K562 (cell line): ENCODE measurements at regions of chr7 and their contacts with region 1.

Region 1: GRCh38 chr7:30504347-30505173 is at the start of gene GGCT:
- DNase-seq: peak; percentile 99 to 100 (median 100)
- ATAC-seq: peak; percentile 98
- H3K4me3 ChIP-seq: peak within 1 kb of the TSS; percentile 82
- H3K27ac ChIP-seq: peak within 1 kb of the TSS; percentile 82
- H3K4me1 ChIP-seq: peaks cover 14 to 16% of the 10 kb centered on the region in 2 experiments; a peak in 4 of 5 replicates
- H3K27me3 ChIP-seq: no peaks in the 10 kb centered on the region
- CTCF ChIP-seq: 0 out of 6 replicates have a peak, but pooled peaks of 1 of the 3 experiments have one; percentile 4
- EP300 ChIP-seq: peak; percentile 23
- POLR2A ChIP-seq: peak; percentile 94
- RAD21 ChIP-seq: no peak
- polyA plus RNA-seq, gene GGCT: 285 to 349 TPM

Region 2: GRCh38 chr7:30478349-30479201 is 26.0 kb before region 1 on chr7 and contains the start of gene NOD1:
- CTCF ChIA-PET with region 1: no interaction called
- POLR2A ChIA-PET with region 1: interaction called, 3 read pairs
- in situ Hi-C with region 1: no loop called
- intact Hi-C with region 1: loop called (anchors 1 kb)
- DNase-seq: peak; percentile 83 to 87 (median 86)
- ATAC-seq: peak; percentile 99
- H3K4me3 ChIP-seq: peak within 1 kb of the TSS; percentile 68
- H3K27ac ChIP-seq: peak within 1 kb of the TSS; percentile 58
- H3K4me1 ChIP-seq: peaks cover 16% of the 10 kb centered on the region in 2 experiments
- H3K27me3 ChIP-seq: no peaks in the 10 kb centered on the region
- CTCF ChIP-seq: 0 out of 6 replicates have a peak, but pooled peaks of 1 of the 3 experiments have one; percentile 3
- EP300 ChIP-seq: no peak
- POLR2A ChIP-seq: peak; percentile 86
- RAD21 ChIP-seq: no peak
- polyA plus RNA-seq, gene NOD1: 0.34 to 1.1 TPM

Region 3: DNA sequence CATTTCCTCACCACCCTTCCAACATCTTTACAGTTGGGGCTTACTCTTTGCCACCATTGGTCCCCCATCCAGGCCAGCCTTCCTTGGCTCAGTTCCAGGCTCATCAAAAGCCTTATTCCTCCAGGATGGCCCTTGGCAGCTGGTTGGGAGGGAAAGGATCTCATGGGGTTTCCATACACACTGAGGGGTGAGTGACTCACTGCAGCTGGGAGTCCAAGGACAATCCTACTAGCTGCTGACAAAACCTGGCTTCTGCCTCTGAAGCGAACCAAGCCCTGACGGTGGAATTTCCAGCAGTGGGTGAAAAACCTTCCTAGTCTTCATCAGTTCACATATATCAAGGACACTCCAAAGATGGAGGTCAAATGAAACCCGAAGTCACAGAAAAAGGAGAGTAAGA is 154.8 kb after region 1 on chr7:
- CTCF ChIA-PET with region 1: no interaction called
- POLR2A ChIA-PET with region 1: no interaction called
- in situ Hi-C with region 1: no loop called
- intact Hi-C with region 1: no loop called
- DNase-seq: no peak
- ATAC-seq: no peak
- H3K4me3 ChIP-seq: no peak overlapping the region
- H3K27ac ChIP-seq: no peak overlapping the region
- H3K4me1 ChIP-seq: peaks cover 0 to 3% of the 10 kb centered on the region in 2 experiments; a peak in 1 of 5 replicates
- H3K27me3 ChIP-seq: peaks cover 4 to 69% of the 10 kb centered on the region in 2 experiments; a peak in 4 of 5 replicates
- CTCF ChIP-seq: no peak
- EP300 ChIP-seq: no peak
- POLR2A ChIP-seq: no peak
- RAD21 ChIP-seq: no peak